ENCODE measurements at regions of chr2 and their contacts with region 1.

Region 1: GRCh38 chr2:16218625-16219024 is 278.3 kb downstream of the MYCN start:
- DNase-seq: no peak
- H3K4me3 Mint-ChIP-seq: no peak overlapping the region
- H3K27ac Mint-ChIP-seq: no peak overlapping the region
- H3K4me1 Mint-ChIP-seq: no peaks in the 10 kb centered on the region
- H3K27me3 Mint-ChIP-seq: no peaks in the 10 kb centered on the region

Region 2: DNA sequence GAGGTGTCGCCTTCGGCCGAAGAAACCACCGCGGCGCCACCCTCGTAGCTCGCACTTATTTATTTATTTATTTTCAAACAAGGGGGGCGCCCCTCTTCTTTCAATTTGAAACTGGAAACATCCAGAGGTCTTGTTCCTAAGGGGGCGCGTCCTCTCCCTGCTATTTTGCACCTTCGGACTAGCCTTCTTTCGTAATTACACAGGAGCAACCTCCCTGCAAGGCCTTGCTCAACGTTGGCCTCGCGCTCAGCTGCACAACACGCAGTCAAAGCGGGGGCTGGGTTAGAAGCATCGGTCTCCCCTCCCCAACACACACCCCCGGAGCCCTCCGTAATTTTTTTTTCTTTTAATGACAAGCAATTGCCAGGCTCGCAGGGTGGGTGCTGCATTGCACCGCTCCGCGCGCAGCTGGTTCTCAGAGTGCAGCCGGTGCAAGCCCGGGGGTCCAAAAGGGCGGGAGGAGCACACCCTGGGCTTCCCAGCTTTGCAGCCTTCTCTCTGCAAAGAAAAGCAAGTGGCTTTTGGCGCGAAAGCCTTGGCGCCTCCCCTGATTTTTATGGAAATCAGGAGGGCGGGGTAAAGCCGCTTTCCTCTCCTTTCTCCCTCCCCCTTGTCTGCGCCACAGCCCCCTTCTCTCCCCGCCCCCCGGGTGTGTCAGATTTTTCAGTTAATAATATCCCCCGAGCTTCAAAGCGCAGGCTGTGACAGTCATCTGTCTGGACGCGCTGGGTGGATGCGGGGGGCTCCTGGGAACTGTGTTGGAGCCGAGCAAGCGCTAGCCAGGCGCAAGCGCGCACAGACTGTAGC is 278.6 kb before region 1 on chr2 and contains the start of gene MYCN:
- CTCF ChIA-PET with region 1: interaction called, 11 read pairs
- POLR2A ChIA-PET with region 1: no interaction called
- DNase-seq: peak; percentile 37
- H3K4me3 Mint-ChIP-seq: peak within 1 kb of the TSS; percentile 7
- H3K27ac Mint-ChIP-seq: no peak within 1 kb of the TSS
- H3K4me1 Mint-ChIP-seq: peaks cover 3% of the 10 kb centered on the region
- H3K27me3 Mint-ChIP-seq: peaks cover 61% of the 10 kb centered on the region
- total RNA-seq, gene MYCN: not detected

Region 3: DNA sequence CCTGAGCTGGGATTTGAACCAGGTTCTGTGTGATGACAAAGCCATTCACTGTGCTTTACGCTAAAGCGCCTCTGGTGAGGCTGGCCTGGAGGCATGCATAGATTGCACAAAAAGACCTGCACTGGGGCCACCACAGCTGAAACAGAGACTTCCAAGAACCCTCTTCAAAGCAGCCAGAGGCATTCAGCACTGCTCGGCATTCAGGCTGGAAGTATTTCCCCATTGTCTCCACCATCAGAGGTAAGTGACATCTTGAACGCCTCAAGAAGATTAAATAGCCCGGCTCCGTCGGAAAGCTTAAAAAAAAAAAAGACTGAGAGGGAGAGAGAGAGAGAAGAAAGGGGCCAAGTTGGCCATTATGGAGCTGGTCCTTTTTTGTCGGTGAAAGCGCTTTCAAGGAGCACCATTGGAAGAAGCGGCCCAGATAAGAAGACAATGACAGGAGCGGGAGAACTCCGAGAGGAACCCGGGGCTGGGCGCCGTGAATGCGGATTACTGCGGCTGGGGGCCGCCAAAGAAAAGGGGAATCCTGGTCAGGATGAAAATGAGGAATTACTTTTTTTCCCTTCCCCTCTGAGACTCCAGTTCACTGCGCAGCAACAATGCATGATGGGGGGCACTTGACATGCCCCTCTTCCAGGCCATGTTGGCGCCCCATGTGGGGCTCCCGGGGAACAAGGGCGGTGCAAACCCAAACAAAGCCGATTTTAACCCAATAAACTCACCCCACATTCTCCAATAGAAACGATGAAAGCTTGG is 49.9 kb before region 1 on chr2:
- CTCF ChIA-PET with region 1: no interaction called
- POLR2A ChIA-PET with region 1: no interaction called
- DNase-seq: no peak
- H3K4me3 Mint-ChIP-seq: no peak overlapping the region
- H3K27ac Mint-ChIP-seq: no peak overlapping the region
- H3K4me1 Mint-ChIP-seq: no peaks in the 10 kb centered on the region
- H3K27me3 Mint-ChIP-seq: no peaks in the 10 kb centered on the region

Region 4: GRCh38 chr2:16257322-16258028 is 38.9 kb after region 1 on chr2:
- CTCF ChIA-PET with region 1: no interaction called
- POLR2A ChIA-PET with region 1: no interaction called
- DNase-seq: no peak
- H3K4me3 Mint-ChIP-seq: no peak overlapping the region
- H3K27ac Mint-ChIP-seq: no peak overlapping the region
- H3K4me1 Mint-ChIP-seq: no peaks in the 10 kb centered on the region
- H3K27me3 Mint-ChIP-seq: no peaks in the 10 kb centered on the region

Region 5: GRCh38 chr2:16373341-16373740 is 154.7 kb after region 1 on chr2:
- CTCF ChIA-PET with region 1: no interaction called
- POLR2A ChIA-PET with region 1: no interaction called
- DNase-seq: no peak
- H3K4me3 Mint-ChIP-seq: no peak overlapping the region
- H3K27ac Mint-ChIP-seq: no peak overlapping the region
- H3K4me1 Mint-ChIP-seq: no peaks in the 10 kb centered on the region
- H3K27me3 Mint-ChIP-seq: no peaks in the 10 kb centered on the region

Measured in activated CD4-positive, alpha-beta memory T cell treated with anti-CD3 and anti-CD28 coated beads, Interleukin-2, amount 10 ng/mL, durations not matched to agents 7 days and 5 days (primary cell).